ENCODE measurements at regions of chr17 and their contacts with region 1.

Region 1: GRCh38 chr17:44919885-44920564 is 4.7 kb upstream of the GFAP start:
- DNase-seq: peak; percentile 89
- H3K4me3 ChIP-seq: no peak overlapping the region; a peak in 1 of 4 replicates
- H3K27ac ChIP-seq: no peak overlapping the region; a peak in 1 of 4 replicates
- H3K4me1 ChIP-seq: peaks cover 18 to 42% of the 10 kb centered on the region in 2 experiments; a peak in 3 of 4 replicates
- H3K27me3 ChIP-seq: no peaks in the 10 kb centered on the region
- CTCF ChIP-seq: peak; percentile 84
- EP300 ChIP-seq: no peak; a peak in 1 of 4 replicates
- RAD21 ChIP-seq: peak; percentile 98

Region 2: GRCh38 chr17:44906010-44906646 is 13.9 kb before region 1 on chr17:
- CTCF ChIA-PET with region 1: interaction called, 44 read pairs
- POLR2A ChIA-PET with region 1: no interaction called
- DNase-seq: no peak
- H3K4me3 ChIP-seq: no peak overlapping the region
- H3K27ac ChIP-seq: peak overlapping the region; percentile 51 to 98; a peak in 3 of 4 replicates
- H3K4me1 ChIP-seq: peaks cover 8 to 47% of the 10 kb centered on the region in 2 experiments; a peak in 3 of 4 replicates
- H3K27me3 ChIP-seq: no peaks in the 10 kb centered on the region
- CTCF ChIP-seq: 0 out of 2 replicates have a peak, but pooled peaks have one; percentile 6
- EP300 ChIP-seq: peak in 1 of 2 experiments; percentile 66; a peak in 1 of 4 replicates
- RAD21 ChIP-seq: no peak

Region 3: GRCh38 chr17:44941712-44942331 is 21.8 kb after region 1 on chr17:
- CTCF ChIA-PET with region 1: interaction called, 19 read pairs
- POLR2A ChIA-PET with region 1: no interaction called
- DNase-seq: peak; percentile 32
- H3K4me3 ChIP-seq: no peak overlapping the region
- H3K27ac ChIP-seq: peak overlapping the region; percentile 3 to 56; a peak in 2 of 4 replicates
- H3K4me1 ChIP-seq: peaks cover 0 to 15% of the 10 kb centered on the region in 2 experiments; a peak in 1 of 4 replicates
- H3K27me3 ChIP-seq: no peaks in the 10 kb centered on the region
- CTCF ChIP-seq: no peak
- EP300 ChIP-seq: no peak
- RAD21 ChIP-seq: no peak

Region 4: GRCh38 chr17:44961921-44962350 is 41.9 kb after region 1 on chr17:
- CTCF ChIA-PET with region 1: interaction called, 119 read pairs
- POLR2A ChIA-PET with region 1: interaction called, 9 read pairs
- DNase-seq: no peak
- H3K4me3 ChIP-seq: no peak overlapping the region
- H3K27ac ChIP-seq: no peak overlapping the region
- H3K4me1 ChIP-seq: peaks cover 0 to 23% of the 10 kb centered on the region in 2 experiments; a peak in 1 of 4 replicates
- H3K27me3 ChIP-seq: peaks cover 3% of the 10 kb centered on the region; the same call in 1 of the 2 replicates
- CTCF ChIP-seq: peak; percentile 23; the same call in 1 of the 2 replicates
- EP300 ChIP-seq: no peak
- RAD21 ChIP-seq: peak; percentile 54

Region 5: DNA sequence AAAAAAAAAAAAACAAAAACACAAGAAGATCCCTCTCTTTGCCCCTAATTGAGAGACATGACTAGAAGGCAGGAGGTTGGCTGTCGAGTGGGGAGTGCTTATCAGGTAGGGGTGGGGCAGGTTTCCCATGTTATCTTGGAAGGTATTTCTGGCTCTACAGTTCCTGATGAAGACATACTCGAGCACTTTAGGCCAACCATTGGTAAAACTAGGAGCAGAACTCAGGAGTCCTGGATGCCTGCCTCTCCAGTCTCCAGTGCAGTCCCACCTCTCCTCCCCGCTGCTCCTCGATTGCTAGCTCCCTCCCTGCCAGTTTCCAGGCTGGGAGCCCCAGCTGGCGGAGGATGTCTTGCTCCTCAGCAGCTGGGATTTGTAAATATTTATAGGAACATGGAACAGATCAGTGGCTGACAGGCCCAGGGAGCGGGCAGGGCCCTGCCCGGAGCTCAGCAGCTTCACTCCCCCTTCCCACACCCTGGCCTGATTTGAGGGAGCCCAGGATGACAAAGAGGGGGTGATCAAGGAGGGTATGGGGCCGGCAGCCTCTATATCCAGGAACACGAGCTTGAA is 59.5 kb after region 1 on chr17:
- CTCF ChIA-PET with region 1: interaction called, 20 read pairs
- POLR2A ChIA-PET with region 1: no interaction called
- DNase-seq: no peak
- H3K4me3 ChIP-seq: no peak overlapping the region
- H3K27ac ChIP-seq: no peak overlapping the region
- H3K4me1 ChIP-seq: peaks cover 0 to 18% of the 10 kb centered on the region in 2 experiments; a peak in 1 of 4 replicates
- H3K27me3 ChIP-seq: no peaks in the 10 kb centered on the region
- CTCF ChIP-seq: no peak
- EP300 ChIP-seq: no peak
- RAD21 ChIP-seq: no peak

Region 6: GRCh38 chr17:45021607-45022287 is 101.7 kb after region 1 on chr17:
- CTCF ChIA-PET with region 1: interaction called, 433 read pairs
- POLR2A ChIA-PET with region 1: interaction called, 14 read pairs
- DNase-seq: peak; percentile 96
- H3K4me3 ChIP-seq: peak overlapping the region in 1 of 2 experiments; percentile 19; a peak in 1 of 4 replicates
- H3K27ac ChIP-seq: peak overlapping the region in 1 of 2 experiments; percentile 77; a peak in 2 of 4 replicates
- H3K4me1 ChIP-seq: peaks cover 10 to 34% of the 10 kb centered on the region in 2 experiments; a peak in 1 of 4 replicates
- H3K27me3 ChIP-seq: no peaks in the 10 kb centered on the region
- CTCF ChIP-seq: peak; percentile 88
- EP300 ChIP-seq: no peak
- RAD21 ChIP-seq: peak; percentile 77

Region 7: GRCh38 chr17:45087504-45087975 is 167.5 kb after region 1 on chr17:
- CTCF ChIA-PET with region 1: interaction called, 10 read pairs
- POLR2A ChIA-PET with region 1: no interaction called
- DNase-seq: no peak
- H3K4me3 ChIP-seq: no peak overlapping the region
- H3K27ac ChIP-seq: peak overlapping the region in 1 of 2 experiments; percentile 37; a peak in 1 of 4 replicates
- H3K4me1 ChIP-seq: no peaks in the 10 kb centered on the region; a peak in 1 of 4 replicates
- H3K27me3 ChIP-seq: no peaks in the 10 kb centered on the region
- CTCF ChIP-seq: no peak
- EP300 ChIP-seq: no peak
- RAD21 ChIP-seq: no peak

Measured in SK-N-SH (cell line).